Activated naive CD4-positive, alpha-beta T cell treated with anti-CD3 and anti-CD28 coated beads, Interleukin-2, amount 10 ng/mL, durations not matched to agents 7 days and 5 days (primary cell): ENCODE measurements at regions of chr3 and their contacts with region 1.

Region 1: GRCh38 chr3:122305818-122306621 is 19.0 kb upstream of the CSTA start:
- DNase-seq: no peak
- H3K4me3 Mint-ChIP-seq: no peak overlapping the region
- H3K27ac Mint-ChIP-seq: no peak overlapping the region
- H3K4me1 Mint-ChIP-seq: peaks cover 2% of the 10 kb centered on the region
- H3K27me3 Mint-ChIP-seq: peaks cover 24% of the 10 kb centered on the region

Region 2: DNA sequence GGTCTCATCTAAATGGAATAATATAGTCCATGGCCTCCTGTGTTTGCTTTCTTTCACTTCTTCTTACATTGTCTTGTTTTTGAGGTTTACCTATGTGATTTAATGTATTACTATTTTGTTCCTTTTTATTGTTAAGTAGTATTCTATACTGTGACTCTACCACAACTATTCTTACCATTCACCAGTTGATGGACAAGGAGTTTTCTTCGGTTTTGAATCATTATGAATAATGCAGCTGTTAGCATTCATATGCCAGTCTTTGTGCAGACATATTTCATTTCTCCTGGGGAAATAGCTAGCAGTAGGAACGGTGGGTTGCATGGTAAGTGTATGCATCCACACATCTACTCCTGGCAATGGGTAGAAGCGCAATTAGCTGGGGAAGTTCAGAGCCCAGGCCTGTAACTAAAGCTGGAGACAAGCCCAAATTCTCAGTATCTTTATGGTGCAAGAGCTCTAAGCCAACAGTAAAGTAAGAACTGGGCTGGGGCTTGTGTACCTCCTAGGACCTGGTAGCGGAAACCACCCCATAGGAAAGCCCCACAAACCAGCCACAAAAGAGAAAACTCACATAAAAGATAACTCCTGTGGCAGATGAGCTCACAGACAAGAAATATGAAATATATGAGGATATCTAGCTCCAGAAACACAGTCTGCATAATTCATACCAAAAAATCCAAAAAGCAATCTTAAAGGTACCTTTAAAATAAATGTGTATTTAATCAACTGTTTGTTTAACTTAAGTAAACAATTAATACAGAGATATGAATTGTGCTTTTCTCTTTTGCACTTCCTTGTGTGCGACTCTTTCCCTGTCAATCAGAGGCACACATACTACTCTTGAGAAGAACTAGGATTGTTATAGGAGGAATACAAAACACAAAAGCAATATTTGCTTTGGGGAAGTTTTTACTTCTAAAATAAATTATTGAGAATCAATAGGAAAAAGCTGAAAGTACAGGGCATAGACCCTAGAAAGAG is 16.4 kb after region 1 on chr3:
- CTCF ChIA-PET with region 1: interaction called, 25 read pairs
- DNase-seq: peak; percentile 69
- H3K4me3 Mint-ChIP-seq: no peak overlapping the region
- H3K27ac Mint-ChIP-seq: peak overlapping the region; percentile 52
- H3K4me1 Mint-ChIP-seq: peaks cover 26% of the 10 kb centered on the region
- H3K27me3 Mint-ChIP-seq: peaks cover 28% of the 10 kb centered on the region

Region 3: GRCh38 chr3:122356415-122356814 is 50.4 kb after region 1 on chr3:
- CTCF ChIA-PET with region 1: interaction called, 43 read pairs
- DNase-seq: peak; percentile 58
- H3K4me3 Mint-ChIP-seq: no peak overlapping the region
- H3K27ac Mint-ChIP-seq: no peak overlapping the region
- H3K4me1 Mint-ChIP-seq: peaks cover 9% of the 10 kb centered on the region
- H3K27me3 Mint-ChIP-seq: no peaks in the 10 kb centered on the region

Region 4: GRCh38 chr3:122383771-122384697 is 78.0 kb after region 1 on chr3 and contains the start of gene FAM162A:
- CTCF ChIA-PET with region 1: interaction called, 16 read pairs
- DNase-seq: peak; percentile 96
- H3K4me3 Mint-ChIP-seq: peak within 1 kb of the TSS; percentile 93
- H3K27ac Mint-ChIP-seq: peak within 1 kb of the TSS; percentile 96
- H3K4me1 Mint-ChIP-seq: peaks cover 72% of the 10 kb centered on the region
- H3K27me3 Mint-ChIP-seq: no peaks in the 10 kb centered on the region

Region 5: DNA sequence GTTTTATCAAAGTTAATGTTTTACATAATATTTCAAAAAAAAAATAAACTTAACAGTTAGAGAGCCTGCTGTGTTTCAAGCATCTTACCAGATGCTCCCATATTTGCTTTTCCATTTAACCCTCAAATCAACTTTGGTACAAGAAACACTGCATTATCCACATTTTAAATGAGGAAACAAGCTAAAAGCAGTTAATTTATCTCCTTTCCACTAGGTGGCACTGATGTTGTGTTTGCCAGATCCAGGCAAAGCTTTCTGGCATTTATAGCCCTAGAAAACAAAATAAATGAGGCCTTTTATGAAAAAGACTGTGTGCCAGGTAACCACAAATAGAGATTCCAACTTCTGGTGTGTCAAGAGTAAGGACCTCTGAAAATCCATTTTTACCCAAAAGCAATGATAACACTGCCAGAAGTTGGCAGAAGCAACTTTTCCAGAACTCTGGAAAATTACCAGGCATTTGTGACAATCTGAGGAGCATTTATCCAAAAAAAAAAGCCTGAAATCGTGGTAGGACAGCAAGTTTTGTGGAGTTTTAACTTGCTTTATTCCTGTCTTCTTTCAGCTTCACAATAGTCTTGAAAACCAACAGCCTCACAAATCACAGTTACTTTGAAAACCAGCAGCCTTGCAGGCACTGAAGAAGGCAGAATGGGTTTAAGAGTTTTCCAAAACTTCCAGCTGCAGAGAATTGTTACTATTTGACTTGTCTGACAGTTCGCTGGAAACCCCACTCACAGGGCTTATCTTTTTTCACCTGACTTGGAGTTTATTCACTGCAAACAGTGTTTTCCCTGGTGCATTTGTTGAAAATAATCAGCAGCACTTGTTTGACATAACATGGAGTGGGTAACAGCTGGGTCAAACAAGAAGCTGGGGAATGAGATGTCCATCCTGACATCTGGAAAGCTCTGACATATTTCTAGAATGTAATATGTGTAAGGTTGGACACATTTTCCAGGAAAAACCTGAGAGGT is 87.1 kb after region 1 on chr3:
- CTCF ChIA-PET with region 1: interaction called, 12 read pairs
- DNase-seq: peak; percentile 40
- H3K4me3 Mint-ChIP-seq: no peak overlapping the region
- H3K27ac Mint-ChIP-seq: no peak overlapping the region
- H3K4me1 Mint-ChIP-seq: peaks cover 27% of the 10 kb centered on the region
- H3K27me3 Mint-ChIP-seq: no peaks in the 10 kb centered on the region